Calu3 (cell line): ENCODE measurements at regions of chr2 and their contacts with region 1.

Region 1: GRCh38 chr2:221444106-221444505 is 128.0 kb downstream of the EPHA4 start:
- DNase-seq: peak; percentile 4
- H3K4me3 Mint-ChIP-seq: no peak overlapping the region
- H3K27ac Mint-ChIP-seq: no peak overlapping the region
- H3K4me1 Mint-ChIP-seq: peaks cover 30% of the 10 kb centered on the region
- H3K27me3 Mint-ChIP-seq: no peaks in the 10 kb centered on the region
- CTCF ChIP-seq: no peak

Region 2: DNA sequence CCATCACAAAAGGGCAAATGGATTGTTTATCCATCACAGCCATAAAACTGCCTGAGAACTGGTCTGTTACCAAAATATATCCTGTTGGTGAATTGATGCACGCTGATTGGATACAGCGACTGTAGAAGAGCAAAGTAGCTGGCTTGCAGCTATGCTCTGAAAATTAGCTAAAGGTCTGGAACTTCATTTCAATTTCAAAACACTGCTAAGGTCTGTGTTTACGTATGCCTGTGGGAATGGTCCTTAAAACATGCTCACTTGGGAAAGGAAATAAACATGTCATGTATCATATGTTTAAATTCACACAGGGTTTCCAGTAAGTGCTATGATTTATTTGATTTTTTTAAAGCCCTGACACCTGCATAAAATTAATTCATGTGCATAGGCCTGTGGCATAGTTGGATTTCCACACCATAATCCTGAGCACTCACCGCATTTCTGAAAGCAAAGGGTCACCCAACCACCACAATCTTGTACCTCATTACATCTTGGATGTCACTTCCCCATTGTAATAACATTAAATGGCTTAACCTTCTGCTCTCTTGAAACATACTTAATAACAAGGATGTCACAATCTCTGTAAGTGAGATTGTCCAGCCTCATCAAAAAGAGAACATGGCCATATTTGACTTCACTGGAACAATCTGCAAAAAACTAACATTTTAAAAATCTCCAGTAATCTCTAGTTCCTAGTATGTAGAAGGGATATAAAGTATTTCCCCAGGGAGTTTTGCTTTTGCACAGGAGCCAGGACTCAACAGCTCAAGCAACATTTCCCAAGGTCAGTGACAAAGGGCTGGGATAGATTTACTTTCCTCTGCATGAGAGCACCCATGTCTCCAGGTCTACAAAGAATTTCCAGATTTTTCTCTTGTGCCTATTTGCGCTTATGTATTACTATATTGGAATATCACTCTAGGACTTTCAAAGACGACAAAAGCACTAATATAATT is 1102.0 kb after region 1 on chr2:
- CTCF ChIA-PET with region 1: interaction called, 15 read pairs
- intact Hi-C with region 1: no loop called
- DNase-seq: no peak
- H3K4me3 Mint-ChIP-seq: no peak overlapping the region
- H3K27ac Mint-ChIP-seq: no peak overlapping the region
- H3K4me1 Mint-ChIP-seq: peaks cover 11% of the 10 kb centered on the region
- H3K27me3 Mint-ChIP-seq: no peaks in the 10 kb centered on the region
- CTCF ChIP-seq: no peak